Activated CD4-positive, alpha-beta T cell treated with anti-CD3 and anti-CD28 coated beads for 36 hours (primary cell): ENCODE measurements at regions of chr12 and their contacts with region 1.

Region 1: GRCh38 chr12:81644503-81644902 is 114.6 kb downstream of the PPFIA2 start:
- DNase-seq: no peak
- ATAC-seq: no peak
- H3K4me3 Mint-ChIP-seq: no peak overlapping the region
- H3K27ac Mint-ChIP-seq: no peak overlapping the region
- H3K4me1 Mint-ChIP-seq: no peaks in the 10 kb centered on the region
- H3K27me3 Mint-ChIP-seq: peaks cover 5% of the 10 kb centered on the region

Region 2: GRCh38 chr12:81797100-81797499 is 152.6 kb after region 1 on chr12:
- CTCF ChIA-PET with region 1: no interaction called
- POLR2A ChIA-PET with region 1: no interaction called
- intact Hi-C with region 1: loop called in 1 of 2 experiments (anchors 5 kb)
- DNase-seq: no peak
- ATAC-seq: no peak
- H3K4me3 Mint-ChIP-seq: no peak overlapping the region
- H3K27ac Mint-ChIP-seq: no peak overlapping the region
- H3K4me1 Mint-ChIP-seq: peaks cover 15% of the 10 kb centered on the region
- H3K27me3 Mint-ChIP-seq: peaks cover 19% of the 10 kb centered on the region

Region 3: GRCh38 chr12:81992461-81992860 is 348.0 kb after region 1 on chr12:
- CTCF ChIA-PET with region 1: interaction called, 3 read pairs
- POLR2A ChIA-PET with region 1: no interaction called
- intact Hi-C with region 1: loop called (anchors 1 kb)
- DNase-seq: peak; percentile 44
- ATAC-seq: peak; percentile 68
- H3K4me3 Mint-ChIP-seq: no peak overlapping the region
- H3K27ac Mint-ChIP-seq: no peak overlapping the region
- H3K4me1 Mint-ChIP-seq: peaks cover 3% of the 10 kb centered on the region
- H3K27me3 Mint-ChIP-seq: no peaks in the 10 kb centered on the region

Region 4: GRCh38 chr12:82019533-82019932 is 375.0 kb after region 1 on chr12:
- CTCF ChIA-PET with region 1: no interaction called
- POLR2A ChIA-PET with region 1: no interaction called
- intact Hi-C with region 1: loop called (anchors 1 to 5 kb)
- DNase-seq: peak; percentile 8
- ATAC-seq: no peak
- H3K4me3 Mint-ChIP-seq: no peak overlapping the region
- H3K27ac Mint-ChIP-seq: no peak overlapping the region
- H3K4me1 Mint-ChIP-seq: no peaks in the 10 kb centered on the region
- H3K27me3 Mint-ChIP-seq: no peaks in the 10 kb centered on the region

Region 5: GRCh38 chr12:82326905-82327503 is 682.5 kb after region 1 on chr12:
- CTCF ChIA-PET with region 1: no interaction called
- POLR2A ChIA-PET with region 1: no interaction called
- intact Hi-C with region 1: loop called (anchors 1 kb)
- DNase-seq: no peak
- ATAC-seq: no peak
- H3K4me3 Mint-ChIP-seq: no peak overlapping the region
- H3K27ac Mint-ChIP-seq: no peak overlapping the region
- H3K4me1 Mint-ChIP-seq: no peaks in the 10 kb centered on the region
- H3K27me3 Mint-ChIP-seq: peaks cover 3% of the 10 kb centered on the region

Region 6: GRCh38 chr12:82358200-82359114 is 714.0 kb after region 1 on chr12 and contains the starts of genes CCDC59 and METTL25:
- CTCF ChIA-PET with region 1: no interaction called
- POLR2A ChIA-PET with region 1: no interaction called
- intact Hi-C with region 1: loop called in 1 of 2 experiments (anchors 1 kb)
- DNase-seq: peak; percentile 98
- ATAC-seq: peak; percentile 96
- H3K4me3 Mint-ChIP-seq: peak within 1 kb of the TSS; percentile 98
- H3K27ac Mint-ChIP-seq: peak within 1 kb of the TSS; percentile 99
- H3K4me1 Mint-ChIP-seq: peaks cover 44% of the 10 kb centered on the region
- H3K27me3 Mint-ChIP-seq: no peaks in the 10 kb centered on the region
- total RNA-seq, gene CCDC59: 104 to 137 TPM
- total RNA-seq, gene METTL25: 5.0 to 5.3 TPM